ENCODE measurements at regions of chr4 and their contacts with region 1.

Region 1: DNA sequence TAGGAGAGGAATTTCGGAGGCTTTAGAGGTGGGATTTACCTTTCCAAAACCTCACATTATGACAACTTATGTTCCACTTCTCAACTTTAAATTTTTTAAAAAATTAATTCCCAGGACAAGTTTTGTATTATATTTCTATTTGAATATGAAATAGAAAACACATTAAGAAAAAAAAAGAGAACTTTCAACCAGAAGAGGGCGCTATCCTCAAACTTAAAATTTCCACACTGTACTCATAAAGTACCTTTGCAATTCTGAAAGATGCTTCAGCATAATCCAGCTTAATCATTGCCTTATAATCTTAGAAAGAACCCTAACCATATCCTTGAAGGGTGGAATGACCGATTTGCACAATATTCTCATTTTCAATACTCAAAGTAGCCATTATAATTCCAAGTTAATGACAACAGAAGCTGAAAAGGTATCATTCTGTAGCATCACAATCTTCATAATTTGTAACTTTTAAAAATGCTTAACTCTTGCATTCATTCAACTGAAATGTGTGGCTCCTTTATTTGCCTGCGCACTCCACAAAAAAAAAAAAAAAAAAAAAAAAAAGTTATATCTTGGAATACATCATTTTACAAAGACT is 158.0 kb downstream of the KCNIP4 start:
- DNase-seq: peak; percentile 78
- ATAC-seq: peak; percentile 41
- H3K4me3 ChIP-seq: peak overlapping the region; percentile 57; the same call in 1 of the 2 replicates
- H3K27ac ChIP-seq: peak overlapping the region; percentile 93
- H3K4me1 ChIP-seq: peaks cover 13% of the 10 kb centered on the region
- H3K27me3 ChIP-seq: no peaks in the 10 kb centered on the region
- CTCF ChIP-seq: peak; percentile 64

Region 2: GRCh38 chr4:21819086-21819485 is 28.6 kb after region 1 on chr4:
- CTCF ChIA-PET with region 1: no interaction called
- POLR2A ChIA-PET with region 1: no interaction called
- intact Hi-C with region 1: no loop called
- DNase-seq: no peak
- ATAC-seq: no peak
- H3K4me3 ChIP-seq: no peak overlapping the region
- H3K27ac ChIP-seq: no peak overlapping the region
- H3K4me1 ChIP-seq: no peaks in the 10 kb centered on the region
- H3K27me3 ChIP-seq: no peaks in the 10 kb centered on the region
- CTCF ChIP-seq: no peak

Region 3: DNA sequence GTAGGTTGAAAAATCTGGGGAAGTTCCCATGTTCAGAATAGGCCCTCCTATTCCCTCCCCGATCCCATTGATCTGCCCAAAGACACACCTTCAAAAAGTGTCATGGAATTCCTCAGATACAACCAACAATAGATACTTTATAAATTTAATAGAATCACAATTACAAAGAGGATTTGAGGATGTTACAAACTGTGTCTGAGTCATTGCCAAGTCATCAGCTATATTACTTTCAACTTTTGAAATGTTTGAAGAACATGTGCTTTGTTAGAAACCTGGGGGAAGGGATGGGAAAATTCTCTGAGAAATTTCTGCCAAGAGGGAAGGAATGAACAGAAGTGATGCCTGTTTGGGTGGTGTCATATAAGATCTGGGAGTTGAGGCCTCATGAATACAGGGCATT is 111.3 kb after region 1 on chr4:
- CTCF ChIA-PET with region 1: no interaction called
- POLR2A ChIA-PET with region 1: no interaction called
- intact Hi-C with region 1: loop called (anchors 1 kb)
- DNase-seq: peak; percentile 92
- ATAC-seq: peak; percentile 70
- H3K4me3 ChIP-seq: peak overlapping the region; percentile 44; the same call in 1 of the 2 replicates
- H3K27ac ChIP-seq: peak overlapping the region; percentile 100
- H3K4me1 ChIP-seq: peaks cover 30% of the 10 kb centered on the region
- H3K27me3 ChIP-seq: no peaks in the 10 kb centered on the region
- CTCF ChIP-seq: no peak

Region 4: GRCh38 chr4:22129454-22130029 is 339.0 kb after region 1 on chr4:
- CTCF ChIA-PET with region 1: no interaction called
- POLR2A ChIA-PET with region 1: no interaction called
- intact Hi-C with region 1: loop called (anchors 1 kb)
- DNase-seq: peak; percentile 69
- ATAC-seq: peak; percentile 33; the same call in 1 of the 2 replicates
- H3K4me3 ChIP-seq: no peak overlapping the region
- H3K27ac ChIP-seq: no peak overlapping the region
- H3K4me1 ChIP-seq: no peaks in the 10 kb centered on the region
- H3K27me3 ChIP-seq: no peaks in the 10 kb centered on the region
- CTCF ChIP-seq: peak; percentile 74

Region 5: DNA sequence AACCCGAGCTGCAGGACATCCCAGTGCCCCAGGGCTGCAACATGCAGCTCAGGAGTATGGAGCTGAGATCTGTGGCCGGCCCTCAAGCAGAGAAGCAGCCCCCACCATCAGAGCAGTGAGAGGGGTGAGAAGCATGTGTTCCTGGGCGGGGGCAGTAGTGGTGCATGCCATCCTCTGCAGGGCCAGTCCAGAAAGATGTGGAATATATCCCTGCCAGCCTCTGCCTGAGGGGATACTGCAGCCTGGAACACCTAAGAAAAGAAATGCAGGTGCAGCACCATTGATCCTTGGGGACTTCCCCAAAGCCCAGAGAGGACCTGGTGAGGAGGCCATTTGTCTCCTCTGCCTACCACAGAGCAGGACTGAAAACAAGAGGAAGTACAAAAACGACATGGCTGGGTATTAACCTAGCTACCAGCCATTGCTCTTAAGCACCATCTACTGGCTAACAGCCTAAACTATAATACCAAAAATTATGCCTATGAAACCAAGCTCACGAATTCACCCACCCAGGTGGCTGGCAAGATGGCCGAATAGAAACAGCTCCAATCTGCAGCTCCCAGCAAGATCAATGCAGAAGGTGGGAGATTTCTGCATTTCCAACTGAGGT is 566.6 kb after region 1 on chr4:
- CTCF ChIA-PET with region 1: interaction called, 12 read pairs
- POLR2A ChIA-PET with region 1: no interaction called
- intact Hi-C with region 1: loop called (anchors 1 kb)
- DNase-seq: peak; percentile 61
- ATAC-seq: peak; percentile 84
- H3K4me3 ChIP-seq: no peak overlapping the region
- H3K27ac ChIP-seq: no peak overlapping the region
- H3K4me1 ChIP-seq: 0 out of 2 replicates have a peak, but pooled peaks cover 2% of the 10 kb centered on the region
- H3K27me3 ChIP-seq: no peaks in the 10 kb centered on the region
- CTCF ChIP-seq: peak; percentile 61

Region 6: GRCh38 chr4:22607382-22607781 is 816.8 kb after region 1 on chr4:
- CTCF ChIA-PET with region 1: no interaction called
- POLR2A ChIA-PET with region 1: no interaction called
- intact Hi-C with region 1: loop called (anchors 2 kb)
- DNase-seq: peak; percentile 62
- ATAC-seq: peak; percentile 99
- H3K4me3 ChIP-seq: no peak overlapping the region
- H3K27ac ChIP-seq: no peak overlapping the region
- H3K4me1 ChIP-seq: no peaks in the 10 kb centered on the region
- H3K27me3 ChIP-seq: no peaks in the 10 kb centered on the region
- CTCF ChIP-seq: peak; percentile 62